Transverse colon (tissue), 4 donors: ENCODE measurements at regions of chr1 and their contacts with region 1.

Region 1: DNA sequence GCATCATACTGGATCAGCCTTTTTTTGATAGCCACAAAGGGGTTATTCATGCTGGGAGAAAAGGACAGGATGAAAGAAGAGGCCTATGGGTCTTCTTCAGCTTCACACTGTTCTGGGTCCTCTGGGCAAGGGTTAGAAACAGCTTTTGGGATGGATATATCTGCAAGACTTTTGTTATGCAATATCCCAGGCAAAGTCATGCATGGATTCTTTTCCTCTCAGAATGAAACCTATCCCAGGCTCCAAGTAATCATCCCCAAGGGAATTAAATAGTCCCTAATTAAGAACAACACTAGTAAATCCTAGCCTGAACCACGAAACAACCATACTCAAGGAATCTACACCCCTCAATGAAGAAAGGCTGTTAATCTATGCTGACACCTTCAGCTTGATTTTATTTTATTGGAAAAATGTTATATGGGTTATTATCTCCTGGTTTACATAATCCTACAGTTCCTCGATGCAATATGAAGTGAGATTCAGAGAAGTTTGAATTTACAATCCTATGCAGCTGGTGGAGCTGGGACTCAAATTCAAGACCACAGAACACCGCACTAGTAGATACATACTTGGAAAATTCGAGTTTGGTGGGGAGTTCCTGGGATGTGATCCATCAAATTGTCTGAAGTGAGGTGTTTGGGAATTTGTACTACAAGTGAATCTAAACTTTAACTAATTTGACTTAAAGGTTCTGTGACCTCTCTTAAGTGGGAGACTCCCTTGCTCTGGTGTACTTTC is 338.6 kb downstream of the TBX15 start:
- DNase-seq: no peak
- H3K4me3 ChIP-seq: no peak overlapping the region
- H3K27ac ChIP-seq: no peak overlapping the region
- H3K4me1 ChIP-seq: no peaks in the 10 kb centered on the region
- H3K27me3 ChIP-seq: no peaks in the 10 kb centered on the region
- CTCF ChIP-seq: no peak
- EP300 ChIP-seq: no peak
- POLR2A ChIP-seq: no peak

Region 2: GRCh38 chr1:118954301-118954905 is 304.9 kb after region 1 on chr1:
- in situ Hi-C with region 1: no loop called
- intact Hi-C with region 1: loop called (anchors 5 kb)
- DNase-seq: no peak
- H3K4me3 ChIP-seq: no peak overlapping the region
- H3K27ac ChIP-seq: no peak overlapping the region
- H3K4me1 ChIP-seq: no peaks in the 10 kb centered on the region
- H3K27me3 ChIP-seq: no peaks in the 10 kb centered on the region
- CTCF ChIP-seq: no peak
- EP300 ChIP-seq: no peak
- POLR2A ChIP-seq: no peak